ENCODE measurements at regions of chr14 and their contacts with region 1.

Region 1: GRCh38 chr14:32076278-32077080 is 625 bp upstream of the ARHGAP5 start:
- DNase-seq: peak; percentile 78 to 98
- H3K4me3 ChIP-seq: peak overlapping the region; percentile 64 to 82
- H3K27ac ChIP-seq: peak overlapping the region; percentile 92 to 97
- H3K4me1 ChIP-seq: peaks cover 0 to 30% of the 10 kb centered on the region in 2 donors
- H3K27me3 ChIP-seq: no peaks in the 10 kb centered on the region
- CTCF ChIP-seq: no peak

Region 2: DNA sequence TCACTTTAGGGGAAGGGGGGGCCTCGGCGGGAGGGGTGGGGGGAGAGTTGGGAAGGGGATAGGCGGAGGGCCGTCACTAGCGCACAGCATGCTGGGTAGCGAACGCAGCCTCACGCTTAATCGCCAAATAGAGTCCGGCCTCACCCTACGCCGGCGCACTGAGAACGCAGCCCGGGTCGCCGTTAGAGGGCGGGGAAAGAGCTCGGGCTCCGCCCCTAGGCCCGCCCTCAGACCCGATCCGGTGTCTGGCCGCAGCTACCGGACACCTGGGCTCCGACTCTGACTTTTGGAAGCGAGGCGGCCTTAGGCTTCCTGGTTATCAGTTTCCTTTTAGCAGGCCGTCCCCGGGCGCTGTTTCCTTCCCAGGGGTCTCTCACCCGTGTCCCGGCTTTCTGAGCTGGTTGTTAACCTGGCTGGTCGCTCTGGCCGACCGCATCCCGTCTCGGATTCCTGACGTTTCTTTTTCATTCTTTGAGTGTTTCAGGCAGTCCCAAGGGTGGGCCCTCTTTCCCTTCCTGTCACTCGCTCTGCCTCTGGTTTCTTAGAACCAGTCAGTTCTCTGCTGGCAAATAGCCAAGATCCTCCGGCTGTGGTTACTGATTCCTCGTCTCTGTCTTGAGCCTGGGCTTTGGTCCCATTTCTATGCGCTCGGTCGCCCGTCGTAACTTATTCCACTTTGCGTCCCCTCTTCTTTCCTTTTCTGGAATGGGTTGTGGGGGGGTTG is 1049.9 kb before region 1 on chr14:
- intact Hi-C with region 1: loop called (anchors 2 kb)
- DNase-seq: peak; percentile 89 to 98
- H3K4me3 ChIP-seq: peak overlapping the region; percentile 98 to 100
- H3K27ac ChIP-seq: peak overlapping the region; percentile 100
- H3K4me1 ChIP-seq: peaks cover 0 to 14% of the 10 kb centered on the region in 2 donors
- H3K27me3 ChIP-seq: no peaks in the 10 kb centered on the region
- CTCF ChIP-seq: no peak

Region 3: DNA sequence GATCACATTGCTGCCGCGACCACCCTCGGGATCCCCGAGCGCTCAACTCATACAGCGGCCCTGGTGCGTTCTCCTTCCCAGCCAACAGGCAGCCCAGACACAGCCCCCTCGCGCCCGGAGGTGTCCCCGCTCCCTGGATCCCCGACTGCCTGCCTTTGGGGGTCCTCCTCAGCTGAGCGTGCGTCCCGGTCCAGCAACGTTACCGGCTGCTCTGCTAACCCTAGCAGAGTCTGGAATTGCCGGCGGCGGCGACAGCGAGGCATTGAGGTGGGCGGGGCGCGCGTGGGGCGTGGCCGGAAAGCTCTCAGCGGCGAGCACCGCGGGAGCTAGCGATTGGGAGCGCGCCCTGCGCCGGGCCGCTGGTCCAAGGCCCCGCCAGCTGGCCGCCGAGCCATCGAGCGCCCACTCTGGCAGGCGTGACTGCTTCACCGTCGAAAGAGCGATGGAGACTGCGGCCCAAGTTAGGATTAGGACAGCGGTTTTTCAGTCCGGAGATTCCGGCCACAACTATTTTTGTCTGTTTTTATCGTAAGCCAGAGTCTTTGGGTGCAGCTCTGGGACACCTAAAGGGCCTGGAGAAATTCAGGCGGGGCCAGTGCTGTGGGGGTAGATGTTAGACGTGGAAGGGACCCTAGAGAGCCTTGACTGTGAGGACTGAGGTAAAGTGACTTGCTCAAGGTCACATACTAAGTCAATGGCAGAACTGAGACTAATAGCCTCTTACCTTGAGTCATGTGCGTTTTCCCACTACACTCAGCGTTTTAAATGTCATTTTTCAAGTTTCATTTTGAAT is 656.0 kb before region 1 on chr14 and contains the start of gene HEATR5A:
- intact Hi-C with region 1: loop called (anchors 10 kb)
- DNase-seq: peak; percentile 71 to 96
- H3K4me3 ChIP-seq: peak within 1 kb of the TSS; percentile 91 to 97
- H3K27ac ChIP-seq: peak within 1 kb of the TSS; percentile 87 to 88
- H3K4me1 ChIP-seq: peaks cover 0 to 12% of the 10 kb centered on the region in 2 donors
- H3K27me3 ChIP-seq: no peaks in the 10 kb centered on the region
- CTCF ChIP-seq: peak in 2 of 3 experiments; percentile 23 to 38
- total RNA-seq, gene HEATR5A: 11.6 TPM

Region 4: GRCh38 chr14:32129124-32129523 is 52.6 kb after region 1 on chr14:
- intact Hi-C with region 1: loop called (anchors 5 kb)
- DNase-seq: no peak
- H3K4me3 ChIP-seq: no peak overlapping the region
- H3K27ac ChIP-seq: no peak overlapping the region
- H3K4me1 ChIP-seq: peaks cover 4 to 9% of the 10 kb centered on the region in 2 donors
- H3K27me3 ChIP-seq: no peaks in the 10 kb centered on the region
- CTCF ChIP-seq: no peak

Region 5: DNA sequence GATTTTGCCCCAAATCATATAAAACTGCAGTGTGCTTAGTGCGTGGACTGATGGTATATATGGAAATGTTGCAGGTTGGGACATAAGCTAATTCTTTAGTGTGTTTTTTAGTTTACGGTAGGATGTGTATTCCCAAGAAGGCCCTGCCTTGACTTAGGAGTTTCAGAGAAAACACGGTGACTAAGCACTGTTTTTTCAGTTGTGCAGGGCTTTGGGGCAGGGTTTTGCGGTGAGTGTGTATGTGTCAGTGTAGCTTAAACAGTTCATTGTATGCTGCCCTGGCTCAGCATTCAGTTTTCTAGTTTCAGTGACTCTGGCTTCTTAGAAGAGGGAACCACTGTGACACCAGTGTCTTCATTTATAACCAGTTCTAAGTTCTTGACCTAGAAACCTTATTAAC is 353.8 kb after region 1 on chr14:
- intact Hi-C with region 1: loop called (anchors 5 kb)
- DNase-seq: no peak
- H3K4me3 ChIP-seq: no peak overlapping the region
- H3K27ac ChIP-seq: peak overlapping the region in 1 of 2 donors; percentile 85
- H3K4me1 ChIP-seq: peaks cover 0 to 4% of the 10 kb centered on the region in 2 donors
- H3K27me3 ChIP-seq: no peaks in the 10 kb centered on the region
- CTCF ChIP-seq: no peak

Region 6: GRCh38 chr14:32560209-32560857 is 483.9 kb after region 1 on chr14:
- intact Hi-C with region 1: loop called (anchors 5 kb)
- DNase-seq: peak in 1 of 2 donors; percentile 72
- H3K4me3 ChIP-seq: no peak overlapping the region
- H3K27ac ChIP-seq: no peak overlapping the region
- H3K4me1 ChIP-seq: peaks cover 8 to 23% of the 10 kb centered on the region in 2 donors
- H3K27me3 ChIP-seq: no peaks in the 10 kb centered on the region
- CTCF ChIP-seq: peak; percentile 51 to 88 (median 81)

Region 7: DNA sequence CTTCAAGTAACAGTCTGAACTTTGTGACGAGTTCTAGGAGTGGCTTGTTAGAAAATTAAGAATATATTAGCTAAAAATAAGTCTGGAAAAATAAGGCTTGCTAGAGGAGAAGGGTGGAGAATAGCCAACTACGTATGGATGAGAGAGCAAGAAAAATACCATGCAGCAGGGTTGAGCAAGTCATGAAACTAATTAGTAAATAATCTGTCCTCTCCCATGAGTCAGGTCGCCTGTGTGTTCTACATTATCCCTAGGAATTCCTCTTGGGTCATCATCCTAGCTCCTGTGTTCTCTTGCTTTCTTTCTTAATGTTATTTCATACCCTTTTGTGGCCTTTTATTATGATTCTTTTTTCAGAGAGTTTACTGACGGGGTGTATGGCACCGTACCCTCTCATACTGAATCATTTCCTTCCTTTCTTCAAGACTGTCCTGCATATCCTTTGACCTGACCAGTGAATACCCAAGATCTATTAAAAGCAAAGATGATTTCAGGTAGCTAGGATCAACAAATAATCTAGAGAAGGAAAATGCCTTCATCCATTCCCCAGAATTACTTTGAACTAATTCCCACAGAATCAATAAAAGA is 685.0 kb after region 1 on chr14:
- intact Hi-C with region 1: no loop called
- DNase-seq: no peak
- H3K4me3 ChIP-seq: peak overlapping the region in 1 of 2 donors; percentile 6
- H3K27ac ChIP-seq: peak overlapping the region; percentile 61 to 62
- H3K4me1 ChIP-seq: peaks cover 3 to 25% of the 10 kb centered on the region in 2 donors
- H3K27me3 ChIP-seq: no peaks in the 10 kb centered on the region
- CTCF ChIP-seq: no peak